ENCODE measurements at regions of chr3 and their contacts with region 1.

Region 1: DNA sequence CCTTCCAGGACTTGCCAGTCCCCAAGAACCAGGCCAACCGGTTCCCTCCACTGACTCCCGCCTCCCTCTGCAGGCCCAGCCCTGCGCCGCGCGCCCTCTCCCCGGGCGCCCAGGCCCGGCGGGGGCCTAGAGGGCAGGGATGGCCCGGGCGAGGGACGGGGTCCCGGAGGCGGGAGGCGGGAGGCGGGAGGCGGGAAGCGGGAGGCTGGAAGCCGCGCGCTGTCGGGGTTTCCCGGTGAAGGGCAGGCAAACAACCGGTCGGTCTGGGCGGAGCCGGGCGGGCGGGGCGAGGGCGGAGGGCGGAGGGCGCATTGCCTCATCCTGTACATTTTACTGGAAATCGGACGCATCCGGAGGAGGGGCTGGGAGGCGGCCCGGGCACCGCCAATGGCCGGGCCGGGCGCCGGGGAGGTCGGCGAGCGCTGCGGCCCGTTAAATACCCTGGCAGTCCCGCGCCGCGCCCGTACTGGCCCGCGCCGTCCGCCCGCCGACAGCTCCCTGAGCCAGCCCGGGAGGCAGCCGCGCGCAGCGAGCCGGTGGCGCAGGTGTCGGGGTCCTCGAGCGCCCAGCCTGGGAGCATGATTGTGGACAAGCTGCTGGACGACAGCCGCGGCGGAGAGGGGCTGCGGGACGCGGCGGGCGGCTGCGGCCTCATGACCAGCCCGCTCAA is at the start of gene NFKBIZ:
- DNase-seq: peak; percentile 97
- H3K4me3 Mint-ChIP-seq: peak within 1 kb of the TSS; percentile 98
- H3K27ac Mint-ChIP-seq: peak within 1 kb of the TSS; percentile 100
- H3K4me1 Mint-ChIP-seq: peaks cover 39% of the 10 kb centered on the region
- H3K27me3 Mint-ChIP-seq: no peaks in the 10 kb centered on the region
- total RNA-seq, gene NFKBIZ: 79.3 to 85.0 TPM

Region 2: GRCh38 chr3:101724329-101725193 is 124.6 kb before region 1 on chr3 and contains the start of gene CEP97:
- CTCF ChIA-PET with region 1: no interaction called
- intact Hi-C with region 1: loop called (anchors 1 kb)
- DNase-seq: peak; percentile 94
- H3K4me3 Mint-ChIP-seq: peak within 1 kb of the TSS; percentile 97
- H3K27ac Mint-ChIP-seq: peak within 1 kb of the TSS; percentile 97
- H3K4me1 Mint-ChIP-seq: peaks cover 33% of the 10 kb centered on the region
- H3K27me3 Mint-ChIP-seq: no peaks in the 10 kb centered on the region
- total RNA-seq, gene CEP97: 17.0 to 20.3 TPM

Region 3: DNA sequence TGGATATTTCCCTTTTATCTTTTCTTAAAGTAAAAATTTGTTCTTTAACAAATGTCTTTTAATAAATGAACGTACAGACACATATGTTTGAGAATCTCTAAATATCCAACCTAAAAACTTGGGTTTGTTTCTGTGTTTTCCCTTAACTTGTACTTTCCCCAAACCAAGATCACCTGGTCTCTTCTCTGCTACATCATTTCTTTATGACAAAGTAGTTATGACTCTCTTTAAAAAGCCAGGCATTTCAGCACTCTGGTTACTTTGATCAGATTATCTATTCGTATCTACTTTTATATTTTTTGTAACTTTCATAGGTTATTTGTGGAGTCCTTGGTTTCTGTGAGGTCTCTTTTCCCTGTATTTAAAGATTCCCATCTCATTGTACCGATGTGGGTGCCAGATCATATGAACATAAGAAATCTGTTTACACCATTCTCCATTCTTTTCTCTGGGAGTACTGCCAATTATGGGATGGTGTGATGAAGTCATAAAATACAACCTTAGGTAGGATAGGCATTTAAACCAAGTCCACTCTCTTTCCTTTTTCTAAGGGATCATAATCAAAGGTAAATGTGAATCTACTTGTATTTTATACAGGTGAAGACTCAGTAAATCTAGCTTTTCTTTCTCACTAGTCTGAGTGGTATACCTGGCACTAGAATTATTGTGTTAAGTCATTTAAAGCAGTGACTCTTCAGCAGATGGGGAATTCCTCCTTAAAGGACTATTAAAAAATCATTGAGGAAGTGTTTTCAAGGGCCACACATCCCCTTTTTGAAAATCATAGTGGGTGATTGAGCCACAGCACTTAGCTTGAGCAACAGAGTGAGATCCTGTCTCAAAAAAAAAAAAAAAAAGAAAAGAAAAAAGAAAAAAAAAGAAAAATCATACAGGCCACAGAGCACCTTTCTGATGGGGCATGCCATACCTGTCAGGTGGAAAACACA is 12.3 kb before region 1 on chr3:
- CTCF ChIA-PET with region 1: interaction called, 3 read pairs
- intact Hi-C with region 1: loop called (anchors 1 kb)
- DNase-seq: no peak
- H3K4me3 Mint-ChIP-seq: no peak overlapping the region
- H3K27ac Mint-ChIP-seq: no peak overlapping the region
- H3K4me1 Mint-ChIP-seq: peaks cover 64% of the 10 kb centered on the region
- H3K27me3 Mint-ChIP-seq: no peaks in the 10 kb centered on the region

Region 4: DNA sequence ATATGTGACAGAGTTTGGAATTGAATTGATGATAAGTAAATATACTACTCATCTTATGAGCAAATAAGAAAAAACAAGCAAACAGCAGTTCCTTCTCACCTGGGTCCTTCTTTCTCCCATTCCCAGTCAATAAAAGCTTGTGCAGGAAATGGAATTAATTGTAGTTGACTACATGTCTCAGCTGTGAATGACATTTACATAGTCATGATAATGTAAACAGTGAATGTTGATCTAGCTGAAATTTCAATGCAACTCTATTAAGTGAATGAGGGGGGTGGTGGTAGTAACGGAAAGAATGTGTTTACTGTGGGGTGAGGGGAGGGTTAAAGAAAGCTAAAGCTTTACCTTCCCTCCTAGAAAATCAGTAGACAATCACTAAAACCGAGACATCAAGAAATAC is 76.4 kb after region 1 on chr3:
- CTCF ChIA-PET with region 1: no interaction called
- intact Hi-C with region 1: loop called (anchors 1 kb)
- DNase-seq: no peak
- H3K4me3 Mint-ChIP-seq: no peak overlapping the region
- H3K27ac Mint-ChIP-seq: no peak overlapping the region
- H3K4me1 Mint-ChIP-seq: peaks cover 30% of the 10 kb centered on the region
- H3K27me3 Mint-ChIP-seq: no peaks in the 10 kb centered on the region

Region 5: DNA sequence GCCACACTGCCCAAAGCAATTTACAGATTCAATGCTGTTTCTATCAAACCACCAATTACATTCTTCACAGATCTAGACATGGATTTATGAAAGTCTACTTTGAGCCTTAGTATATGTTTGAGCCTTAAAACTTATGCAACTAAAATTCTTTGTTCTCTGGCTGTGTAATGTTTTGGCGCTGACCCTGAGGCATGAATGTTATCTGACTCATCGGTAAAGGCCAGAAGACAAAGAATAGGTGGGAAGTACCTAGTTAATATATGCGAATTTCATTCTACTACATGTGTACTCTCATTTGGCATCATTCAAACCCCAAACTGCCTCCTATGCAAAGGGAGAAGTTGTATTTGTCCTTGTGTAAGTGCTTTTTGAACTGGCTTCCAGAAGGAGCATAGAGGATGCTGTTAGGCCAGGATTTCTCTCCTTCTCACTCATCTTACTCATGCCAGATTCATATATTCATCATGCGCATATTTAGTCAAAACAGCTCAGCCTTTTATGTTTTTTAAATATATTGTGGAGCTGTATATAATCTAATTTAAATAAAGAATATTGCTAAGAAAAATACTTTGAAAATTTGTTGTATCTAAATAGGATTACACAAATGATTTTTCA is 204.3 kb after region 1 on chr3:
- CTCF ChIA-PET with region 1: no interaction called
- intact Hi-C with region 1: loop called (anchors 1 kb)
- DNase-seq: peak; percentile 56
- H3K4me3 Mint-ChIP-seq: no peak overlapping the region
- H3K27ac Mint-ChIP-seq: no peak overlapping the region
- H3K4me1 Mint-ChIP-seq: peaks cover 33% of the 10 kb centered on the region
- H3K27me3 Mint-ChIP-seq: no peaks in the 10 kb centered on the region

Measured in activated naive CD4-positive, alpha-beta T cell treated with anti-CD3 and anti-CD28 coated beads for 36 hours (primary cell).